ENCODE measurements at regions of chr4 and their contacts with region 1.

Region 1: DNA sequence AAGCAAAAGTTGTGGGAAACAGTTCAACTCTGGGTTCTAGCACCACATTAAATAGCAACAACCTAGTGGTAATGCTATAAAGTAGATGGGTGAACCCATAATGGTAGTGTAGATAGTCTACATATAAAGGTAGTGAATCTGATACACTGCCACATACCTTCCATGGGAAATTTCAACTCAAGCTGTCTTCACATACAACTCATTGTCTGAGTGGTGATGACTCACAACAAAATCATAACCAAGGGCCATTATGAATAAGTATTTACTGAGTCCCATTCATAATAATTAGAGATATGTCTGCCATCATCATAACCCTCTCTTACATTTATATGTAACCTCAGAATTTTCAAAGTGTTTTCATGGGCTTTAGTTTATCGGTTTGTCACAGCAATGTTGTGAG is 34.8 kb downstream of the EGF start:
- DNase-seq: no peak
- H3K4me3 Mint-ChIP-seq: no peak overlapping the region
- H3K27ac Mint-ChIP-seq: peak overlapping the region; percentile 64
- H3K4me1 Mint-ChIP-seq: peaks cover 37% of the 10 kb centered on the region
- H3K27me3 Mint-ChIP-seq: peaks cover 4% of the 10 kb centered on the region

Region 2: DNA sequence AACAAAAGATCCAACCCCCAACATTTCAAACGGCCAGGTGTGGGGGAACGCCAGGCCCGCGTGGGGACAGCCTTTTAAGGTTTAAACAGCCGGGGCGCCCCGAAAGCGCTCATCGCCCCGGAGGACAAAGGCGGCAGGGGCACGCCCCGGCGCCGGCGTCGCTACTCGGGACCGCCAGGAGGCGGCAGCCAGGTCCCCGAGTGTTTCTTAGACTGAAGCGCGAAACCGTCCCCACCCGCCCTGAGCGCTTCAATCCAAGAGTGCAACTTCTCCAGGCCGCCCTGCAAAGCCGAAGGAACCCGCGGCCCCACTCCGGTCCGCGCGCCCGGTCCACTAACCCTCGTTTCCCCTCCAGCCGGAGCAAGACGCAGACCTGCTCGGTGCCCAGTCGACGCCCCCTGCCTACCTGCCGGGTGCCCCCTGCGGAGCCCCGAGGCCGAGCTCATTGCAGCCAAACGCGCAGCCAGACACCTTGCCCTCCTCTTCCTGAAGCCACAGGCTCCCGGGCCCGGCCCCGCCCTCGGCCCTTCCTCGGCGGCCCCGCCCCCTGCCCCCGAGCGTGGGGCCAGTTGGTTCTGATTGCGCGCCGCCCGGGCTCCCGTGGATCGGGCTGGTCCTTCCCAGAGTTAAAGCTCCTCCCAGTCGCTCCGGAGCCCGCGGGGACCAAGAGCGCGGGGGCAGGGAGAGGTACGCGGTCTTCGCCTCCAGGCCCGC is 244.3 kb before region 1 on chr4 and contains the start of gene CASP6:
- CTCF ChIA-PET with region 1: no interaction called
- POLR2A ChIA-PET with region 1: no interaction called
- intact Hi-C with region 1: loop called (anchors 5 kb)
- DNase-seq: peak; percentile 79
- H3K4me3 Mint-ChIP-seq: peak within 1 kb of the TSS; percentile 90
- H3K27ac Mint-ChIP-seq: peak within 1 kb of the TSS; percentile 82
- H3K4me1 Mint-ChIP-seq: peaks cover 34% of the 10 kb centered on the region
- H3K27me3 Mint-ChIP-seq: no peaks in the 10 kb centered on the region
- total RNA-seq, gene CASP6: 18.4 to 29.9 TPM

Region 3: DNA sequence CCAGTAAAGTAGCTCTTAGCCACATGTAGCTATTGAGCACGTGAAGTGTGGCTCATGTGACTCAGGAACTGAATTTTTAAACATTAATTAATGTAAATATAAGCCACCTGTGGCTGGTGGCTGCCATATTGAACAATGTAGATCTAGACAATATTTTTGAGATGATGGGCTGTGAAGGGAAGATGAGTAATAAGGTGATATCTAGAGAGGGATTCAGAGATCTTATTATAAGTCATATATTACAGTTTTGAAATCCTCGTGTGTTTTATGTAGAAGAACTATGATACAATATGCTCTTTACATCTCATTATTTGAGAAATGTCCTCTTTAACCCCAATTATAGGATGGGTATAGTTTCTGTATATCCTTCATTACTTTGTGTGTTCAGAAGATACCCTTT is 126.3 kb before region 1 on chr4:
- CTCF ChIA-PET with region 1: interaction called, 3 read pairs
- POLR2A ChIA-PET with region 1: interaction called, 3 read pairs
- intact Hi-C with region 1: loop called (anchors 1 kb)
- DNase-seq: peak; percentile 15
- H3K4me3 Mint-ChIP-seq: no peak overlapping the region
- H3K27ac Mint-ChIP-seq: peak overlapping the region; percentile 34
- H3K4me1 Mint-ChIP-seq: peaks cover 49% of the 10 kb centered on the region
- H3K27me3 Mint-ChIP-seq: no peaks in the 10 kb centered on the region

Region 4: DNA sequence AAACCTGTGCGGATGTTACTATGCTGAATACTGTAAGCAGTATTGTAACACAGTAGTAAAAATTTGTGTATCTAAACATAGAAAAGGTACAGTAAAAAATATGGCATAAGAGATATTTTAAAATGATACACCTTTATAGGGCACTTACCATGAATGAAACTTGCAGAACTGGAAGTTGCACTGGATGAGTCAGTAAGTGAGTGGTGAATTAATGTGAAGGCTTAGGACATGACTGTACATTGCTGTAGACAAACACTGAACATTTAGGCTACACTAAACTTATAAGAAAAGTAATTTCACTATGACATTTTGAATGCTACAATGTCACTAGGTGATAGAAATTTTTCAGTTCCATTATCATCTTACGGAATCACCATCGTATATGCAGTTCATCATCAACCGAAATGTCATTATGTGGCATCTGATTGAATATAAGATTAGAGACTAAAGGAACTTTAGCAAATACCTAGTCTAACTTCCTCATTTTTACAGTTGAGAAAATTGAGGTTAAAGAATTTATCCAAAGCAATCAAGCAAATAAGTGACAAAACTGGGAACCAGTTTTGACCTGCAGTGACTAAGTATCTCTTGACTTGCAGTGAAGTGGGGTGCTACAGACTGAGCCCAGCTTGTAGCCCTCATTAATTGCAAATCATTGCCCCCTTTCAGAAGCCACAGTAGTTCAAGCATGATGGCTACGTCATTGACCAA is 20.5 kb after region 1 on chr4:
- CTCF ChIA-PET with region 1: no interaction called
- POLR2A ChIA-PET with region 1: no interaction called
- intact Hi-C with region 1: loop called (anchors 1 kb)
- DNase-seq: no peak
- H3K4me3 Mint-ChIP-seq: no peak overlapping the region
- H3K27ac Mint-ChIP-seq: no peak overlapping the region
- H3K4me1 Mint-ChIP-seq: peaks cover 7% of the 10 kb centered on the region
- H3K27me3 Mint-ChIP-seq: peaks cover 24% of the 10 kb centered on the region

Region 5: GRCh38 chr4:110088670-110089069 is 141.2 kb after region 1 on chr4:
- CTCF ChIA-PET with region 1: no interaction called
- POLR2A ChIA-PET with region 1: no interaction called
- intact Hi-C with region 1: loop called (anchors 1 kb)
- DNase-seq: peak; percentile 43
- H3K4me3 Mint-ChIP-seq: no peak overlapping the region
- H3K27ac Mint-ChIP-seq: peak overlapping the region; percentile 47
- H3K4me1 Mint-ChIP-seq: peaks cover 57% of the 10 kb centered on the region
- H3K27me3 Mint-ChIP-seq: no peaks in the 10 kb centered on the region

Region 6: DNA sequence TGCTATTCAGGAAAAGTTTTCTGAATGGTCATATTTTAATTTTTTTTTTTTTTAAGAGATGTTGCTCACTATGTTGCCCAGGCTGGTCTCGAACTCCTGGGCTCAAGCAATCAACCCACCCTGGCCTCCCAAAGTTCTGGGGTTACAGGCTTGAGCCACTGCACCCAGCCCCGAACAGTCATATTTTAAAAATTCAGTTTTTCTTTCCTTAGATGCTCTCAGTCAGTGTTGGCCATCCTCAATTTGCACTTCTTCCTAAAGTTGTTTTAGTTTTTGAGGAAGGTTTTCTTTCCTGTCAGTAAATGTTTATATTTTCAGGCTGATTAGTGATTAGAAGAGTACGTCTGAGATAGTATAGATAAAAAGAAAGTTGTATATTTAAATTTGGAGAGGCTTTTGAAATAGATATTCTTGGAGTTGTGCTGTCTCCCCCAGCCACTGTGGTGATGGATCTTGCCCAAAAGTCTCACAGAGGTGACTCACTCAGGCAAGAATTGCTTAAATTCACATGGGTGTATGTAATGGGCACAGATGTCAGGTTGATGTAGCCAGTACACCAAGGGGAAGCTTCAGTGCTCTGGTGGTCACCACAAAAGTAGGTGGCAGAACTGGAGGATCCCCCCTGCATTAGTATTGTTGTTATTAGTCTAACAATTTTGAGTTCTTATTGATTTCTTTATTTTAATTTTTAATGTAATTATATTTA is 323.2 kb after region 1 on chr4:
- CTCF ChIA-PET with region 1: no interaction called
- POLR2A ChIA-PET with region 1: no interaction called
- intact Hi-C with region 1: no loop called
- DNase-seq: no peak
- H3K4me3 Mint-ChIP-seq: no peak overlapping the region
- H3K27ac Mint-ChIP-seq: no peak overlapping the region
- H3K4me1 Mint-ChIP-seq: peaks cover 4% of the 10 kb centered on the region
- H3K27me3 Mint-ChIP-seq: peaks cover 10% of the 10 kb centered on the region

Region 7: GRCh38 chr4:110296892-110297291 is 349.4 kb after region 1 on chr4:
- CTCF ChIA-PET with region 1: no interaction called
- POLR2A ChIA-PET with region 1: no interaction called
- intact Hi-C with region 1: loop called (anchors 2 kb)
- DNase-seq: no peak
- H3K4me3 Mint-ChIP-seq: no peak overlapping the region
- H3K27ac Mint-ChIP-seq: no peak overlapping the region
- H3K4me1 Mint-ChIP-seq: peaks cover 12% of the 10 kb centered on the region
- H3K27me3 Mint-ChIP-seq: peaks cover 38% of the 10 kb centered on the region

Region 8: DNA sequence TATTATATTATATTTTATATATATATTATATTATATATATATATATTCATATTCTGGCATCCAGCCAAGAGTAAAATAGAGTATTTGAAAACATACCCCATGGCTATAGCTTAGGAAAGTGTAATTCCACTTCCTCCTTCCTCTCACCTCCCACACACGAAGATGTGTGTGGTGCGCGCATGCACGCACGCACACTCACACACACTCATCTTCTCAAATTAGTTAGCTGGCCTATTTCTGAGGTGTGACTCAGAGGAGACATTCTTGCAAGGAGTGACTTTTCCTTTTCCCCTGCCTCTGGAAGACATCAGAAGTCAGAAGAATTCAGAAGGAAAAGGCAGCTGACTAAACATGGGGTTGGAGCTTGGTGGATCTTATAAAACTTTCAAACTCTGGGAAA is 537.3 kb after region 1 on chr4:
- CTCF ChIA-PET with region 1: no interaction called
- POLR2A ChIA-PET with region 1: no interaction called
- intact Hi-C with region 1: no loop called
- DNase-seq: no peak
- H3K4me3 Mint-ChIP-seq: no peak overlapping the region
- H3K27ac Mint-ChIP-seq: no peak overlapping the region
- H3K4me1 Mint-ChIP-seq: peaks cover 5% of the 10 kb centered on the region
- H3K27me3 Mint-ChIP-seq: peaks cover 34% of the 10 kb centered on the region